ENCODE measurements at regions of chr1 and their contacts with region 1.

Region 1: GRCh38 chr1:47351305-47351704 is 17.7 kb downstream of the CMPK1 start:
- DNase-seq: no peak
- H3K4me3 Mint-ChIP-seq: no peak overlapping the region
- H3K27ac Mint-ChIP-seq: peak overlapping the region; percentile 86
- H3K4me1 Mint-ChIP-seq: peaks cover 21% of the 10 kb centered on the region
- H3K27me3 Mint-ChIP-seq: no peaks in the 10 kb centered on the region

Region 2: GRCh38 chr1:47313915-47314664 is 37.2 kb before region 1 on chr1 and contains the start of gene STIL:
- intact Hi-C with region 1: loop called (anchors 1 kb)
- DNase-seq: peak; percentile 98
- H3K4me3 Mint-ChIP-seq: peak within 1 kb of the TSS; percentile 94
- H3K27ac Mint-ChIP-seq: peak within 1 kb of the TSS; percentile 85
- H3K4me1 Mint-ChIP-seq: peaks cover 27% of the 10 kb centered on the region
- H3K27me3 Mint-ChIP-seq: peaks cover 3% of the 10 kb centered on the region
- total RNA-seq, gene STIL: 25.8 and 26.3 TPM in 2 replicates

Region 3: GRCh38 chr1:47325530-47325929 is 25.8 kb before region 1 on chr1:
- intact Hi-C with region 1: no loop called
- DNase-seq: no peak
- H3K4me3 Mint-ChIP-seq: no peak overlapping the region
- H3K27ac Mint-ChIP-seq: no peak overlapping the region
- H3K4me1 Mint-ChIP-seq: no peaks in the 10 kb centered on the region
- H3K27me3 Mint-ChIP-seq: no peaks in the 10 kb centered on the region

Region 4: GRCh38 chr1:47785561-47786271 is 434.4 kb after region 1 on chr1:
- intact Hi-C with region 1: no loop called
- DNase-seq: no peak
- H3K4me3 Mint-ChIP-seq: no peak overlapping the region
- H3K27ac Mint-ChIP-seq: no peak overlapping the region
- H3K4me1 Mint-ChIP-seq: no peaks in the 10 kb centered on the region
- H3K27me3 Mint-ChIP-seq: no peaks in the 10 kb centered on the region

Measured in activated T-helper 1 cell treated with anti-CD3 and anti-CD28 coated beads, Interleukin-12 subunit alpha, Interleukin-12 subunit beta, Interleukin-2, Interleukin-4 antibody, amounts not matched to agents 30 ng/mL and 10 ng/mL and 1 ng/mL, durations not matched to agents 14 hours and 24 hours and 36 hours (primary cell).